Thyroid gland (tissue), 4 donors: ENCODE measurements at regions of chr10 and their contacts with region 1.

Region 1: DNA sequence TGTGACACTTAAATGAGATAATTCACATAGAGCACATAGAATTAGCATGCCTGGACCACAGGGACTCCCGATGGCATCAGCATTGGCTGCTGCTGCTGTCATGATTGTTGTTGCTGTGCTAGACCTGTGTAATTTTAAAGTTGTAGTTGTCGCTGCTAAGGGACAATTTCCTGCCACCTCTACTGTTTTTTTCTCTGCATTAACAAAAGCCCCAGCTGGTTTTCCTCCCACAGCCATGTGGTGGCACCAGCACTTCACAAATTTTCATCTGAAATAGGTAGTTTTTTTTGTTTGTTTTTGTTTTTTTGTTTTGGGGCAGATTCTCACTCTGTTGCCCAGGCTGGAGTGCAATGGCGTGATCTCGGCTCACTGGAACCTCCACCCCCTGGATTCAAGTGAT is 25.4 kb upstream of the PRXL2A start:
- DNase-seq: peak; percentile 32 to 49
- H3K4me3 ChIP-seq: no peak overlapping the region
- H3K27ac ChIP-seq: no peak overlapping the region
- H3K4me1 ChIP-seq: peaks cover 3 to 9% of the 10 kb centered on the region in 2 donors
- H3K27me3 ChIP-seq: no peaks in the 10 kb centered on the region
- CTCF ChIP-seq: peak in 5 of 6 experiments; percentile 44 to 66 (median 63)
- POLR2A ChIP-seq: no peak

Region 2: DNA sequence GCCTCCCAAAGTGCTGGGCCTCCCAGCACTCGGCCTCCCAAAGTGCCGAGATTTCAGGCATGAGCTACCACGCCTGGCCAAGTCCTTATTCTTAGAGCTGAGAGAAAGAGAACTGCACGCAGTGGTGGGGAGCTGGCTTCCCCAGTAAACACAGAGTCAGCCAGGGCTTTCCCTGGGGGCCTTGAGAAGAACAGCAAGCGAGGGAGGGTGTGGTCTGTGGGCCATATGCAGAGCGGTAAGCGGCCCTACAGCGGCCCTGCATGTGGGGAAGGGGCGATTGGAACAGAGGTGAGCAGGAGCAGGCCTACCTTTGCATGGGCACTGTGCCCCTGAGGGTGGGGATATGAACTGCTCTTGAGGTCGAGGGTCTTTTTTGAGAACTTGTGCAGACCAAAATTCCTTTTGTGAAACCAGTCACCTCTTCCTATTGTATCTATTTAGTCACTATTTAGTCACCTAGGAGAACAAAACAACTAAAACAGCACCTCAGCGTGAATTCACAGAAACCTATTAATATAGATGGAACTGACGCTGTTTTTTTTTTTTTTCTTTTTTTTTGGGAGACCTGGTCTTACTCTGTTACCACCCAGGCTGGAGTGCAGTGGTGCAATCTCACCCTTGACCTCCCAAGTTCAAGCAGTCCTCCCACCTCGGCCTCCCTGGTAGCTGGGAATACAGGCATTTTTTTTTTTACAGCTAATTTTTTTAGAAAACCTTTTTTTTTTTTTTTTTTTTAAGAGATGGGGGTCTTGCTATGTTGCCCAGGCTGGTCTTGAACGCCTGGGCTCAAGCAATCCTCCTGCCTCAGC is 117.8 kb after region 1 on chr10:
- intact Hi-C with region 1: loop called (anchors 10 kb)
- DNase-seq: no peak
- H3K4me3 ChIP-seq: no peak overlapping the region
- H3K27ac ChIP-seq: peak overlapping the region; percentile 69 to 94 (median 86)
- H3K4me1 ChIP-seq: peaks cover 75 to 98% of the 10 kb centered on the region in 2 donors
- H3K27me3 ChIP-seq: no peaks in the 10 kb centered on the region
- CTCF ChIP-seq: no peak
- POLR2A ChIP-seq: no peak

Region 3: GRCh38 chr10:80647173-80647811 is 264.3 kb after region 1 on chr10:
- intact Hi-C with region 1: no loop called
- DNase-seq: no peak
- H3K4me3 ChIP-seq: no peak overlapping the region
- H3K27ac ChIP-seq: no peak overlapping the region
- H3K4me1 ChIP-seq: no peaks in the 10 kb centered on the region
- H3K27me3 ChIP-seq: no peaks in the 10 kb centered on the region
- CTCF ChIP-seq: no peak
- POLR2A ChIP-seq: no peak

Region 4: GRCh38 chr10:81127931-81128330 is 744.9 kb after region 1 on chr10:
- intact Hi-C with region 1: no loop called
- DNase-seq: no peak
- H3K4me3 ChIP-seq: no peak overlapping the region
- H3K27ac ChIP-seq: no peak overlapping the region
- H3K4me1 ChIP-seq: no peaks in the 10 kb centered on the region
- H3K27me3 ChIP-seq: no peaks in the 10 kb centered on the region
- CTCF ChIP-seq: no peak
- POLR2A ChIP-seq: no peak